ENCODE measurements at regions of chr2 and their contacts with region 1.

Region 1: GRCh38 chr2:239329972-239330572 is 70.7 kb downstream of the HDAC4 start:
- DNase-seq: no peak
- ATAC-seq: peak; percentile 24; the same call in 2 of the 3 replicates
- H3K4me3 ChIP-seq: no peak overlapping the region
- H3K27ac ChIP-seq: no peak overlapping the region
- H3K4me1 ChIP-seq: peaks cover 6% of the 10 kb centered on the region; the same call in 1 of the 2 replicates
- H3K27me3 ChIP-seq: no peaks in the 10 kb centered on the region
- CTCF ChIP-seq: no peak
- EP300 ChIP-seq: no peak
- POLR2A ChIP-seq: no peak
- RAD21 ChIP-seq: no peak

Region 2: GRCh38 chr2:239239607-239240413 is 90.3 kb before region 1 on chr2:
- CTCF ChIA-PET with region 1: no interaction called
- POLR2A ChIA-PET with region 1: no interaction called
- in situ Hi-C with region 1: no loop called
- intact Hi-C with region 1: no loop called
- DNase-seq: no peak
- ATAC-seq: no peak
- H3K4me3 ChIP-seq: no peak overlapping the region
- H3K27ac ChIP-seq: no peak overlapping the region
- H3K4me1 ChIP-seq: no peaks in the 10 kb centered on the region
- H3K27me3 ChIP-seq: no peaks in the 10 kb centered on the region
- CTCF ChIP-seq: no peak
- EP300 ChIP-seq: no peak
- POLR2A ChIP-seq: no peak
- RAD21 ChIP-seq: no peak

Region 3: GRCh38 chr2:239275044-239275685 is 54.9 kb before region 1 on chr2:
- CTCF ChIA-PET with region 1: no interaction called
- POLR2A ChIA-PET with region 1: no interaction called
- in situ Hi-C with region 1: no loop called
- intact Hi-C with region 1: no loop called
- DNase-seq: no peak
- ATAC-seq: no peak
- H3K4me3 ChIP-seq: no peak overlapping the region
- H3K27ac ChIP-seq: no peak overlapping the region
- H3K4me1 ChIP-seq: peaks cover 17% of the 10 kb centered on the region
- H3K27me3 ChIP-seq: no peaks in the 10 kb centered on the region
- CTCF ChIP-seq: no peak
- EP300 ChIP-seq: no peak
- POLR2A ChIP-seq: no peak
- RAD21 ChIP-seq: no peak

Region 4: GRCh38 chr2:239346676-239347075 is 16.6 kb after region 1 on chr2:
- CTCF ChIA-PET with region 1: no interaction called
- POLR2A ChIA-PET with region 1: no interaction called
- in situ Hi-C with region 1: no loop called
- intact Hi-C with region 1: loop called (anchors 1 kb)
- DNase-seq: no peak
- ATAC-seq: no peak
- H3K4me3 ChIP-seq: no peak overlapping the region
- H3K27ac ChIP-seq: no peak overlapping the region
- H3K4me1 ChIP-seq: no peaks in the 10 kb centered on the region
- H3K27me3 ChIP-seq: no peaks in the 10 kb centered on the region
- CTCF ChIP-seq: no peak
- EP300 ChIP-seq: no peak
- POLR2A ChIP-seq: no peak
- RAD21 ChIP-seq: no peak